Gastrocnemius medialis (tissue), 4 donors: ENCODE measurements at regions of chr14 and their contacts with region 1.

Region 1: DNA sequence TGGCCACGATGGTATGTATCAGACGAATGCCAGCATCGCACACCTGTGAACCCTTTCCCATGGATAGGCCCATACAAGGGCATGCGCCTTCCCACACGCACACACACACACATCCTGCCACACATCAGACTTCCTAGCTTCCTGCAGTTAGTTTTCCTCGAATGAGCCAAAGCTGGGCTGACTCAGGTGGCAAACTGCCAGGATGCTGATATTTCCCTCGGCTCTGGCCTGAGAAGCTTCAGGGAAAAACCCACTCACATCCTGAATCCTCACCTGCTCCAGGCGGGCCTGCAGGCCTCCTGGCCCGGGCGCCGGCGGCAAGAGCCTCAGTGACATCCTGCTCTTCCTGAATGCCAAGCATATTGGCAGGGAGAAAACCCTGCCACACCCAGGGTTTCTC is 22.4 kb downstream of the CALM1 start:
- DNase-seq: no peak
- ATAC-seq: peak; percentile 44 to 65
- H3K4me3 ChIP-seq: no peak overlapping the region
- H3K27ac ChIP-seq: peak overlapping the region in 2 of 4 donors; percentile 36 to 39
- H3K4me1 ChIP-seq: no peaks in the 10 kb centered on the region
- H3K27me3 ChIP-seq: no peaks in the 10 kb centered on the region
- CTCF ChIP-seq: no peak
- POLR2A ChIP-seq: no peak

Region 2: GRCh38 chr14:90455100-90455571 is 35.9 kb after region 1 on chr14:
- in situ Hi-C with region 1: no loop called
- intact Hi-C with region 1: loop called (anchors 5 kb)
- DNase-seq: no peak
- ATAC-seq: peak in 1 of 2 donors; percentile 57
- H3K4me3 ChIP-seq: no peak overlapping the region
- H3K27ac ChIP-seq: no peak overlapping the region
- H3K4me1 ChIP-seq: no peaks in the 10 kb centered on the region
- H3K27me3 ChIP-seq: no peaks in the 10 kb centered on the region
- CTCF ChIP-seq: no peak
- POLR2A ChIP-seq: no peak